Pancreas (tissue), 10 donors: ENCODE measurements at regions of chr2 and their contacts with region 1.

Region 1: GRCh38 chr2:219543601-219544358 is at the starts of genes CHPF and TMEM198:
- DNase-seq: peak; percentile 96 to 100 (median 99)
- ATAC-seq: peak; percentile 88 to 93 (median 90)
- H3K4me3 ChIP-seq: peak within 1 kb of the TSS; percentile 75 to 92 (median 84)
- H3K27ac ChIP-seq: peak within 1 kb of the TSS; percentile 93 to 98 (median 96)
- H3K4me1 ChIP-seq: peaks cover 0 to 9% (median 5%) of the 10 kb centered on the region in 3 donors
- H3K27me3 ChIP-seq: no peaks in the 10 kb centered on the region
- CTCF ChIP-seq: no peak
- total RNA-seq, gene CHPF: 55.1 to 105 (median 68.5) TPM
- total RNA-seq, gene TMEM198: 2.6 to 7.1 (median 5.1) TPM

Region 2: GRCh38 chr2:219633276-219634065 is 89.7 kb after region 1 on chr2:
- intact Hi-C with region 1: loop called in 1 of 3 experiments (anchors 5 kb)
- DNase-seq: no peak
- ATAC-seq: no peak
- H3K4me3 ChIP-seq: no peak overlapping the region
- H3K27ac ChIP-seq: no peak overlapping the region
- H3K4me1 ChIP-seq: no peaks in the 10 kb centered on the region
- H3K27me3 ChIP-seq: no peaks in the 10 kb centered on the region
- CTCF ChIP-seq: no peak